GM13976 (cell line): ENCODE measurements at regions of chr7 and their contacts with region 1.

Region 1: GRCh38 chr7:155815332-155816191 is 3.3 kb upstream of the SHH start:
- DNase-seq: peak; percentile 92
- CTCF ChIP-seq: peak; percentile 93

Region 2: GRCh38 chr7:156473476-156474240 is 658.1 kb after region 1 on chr7:
- in situ Hi-C with region 1: loop called (anchors 10 kb)
- DNase-seq: peak; percentile 67
- CTCF ChIP-seq: peak; percentile 77

Region 3: DNA sequence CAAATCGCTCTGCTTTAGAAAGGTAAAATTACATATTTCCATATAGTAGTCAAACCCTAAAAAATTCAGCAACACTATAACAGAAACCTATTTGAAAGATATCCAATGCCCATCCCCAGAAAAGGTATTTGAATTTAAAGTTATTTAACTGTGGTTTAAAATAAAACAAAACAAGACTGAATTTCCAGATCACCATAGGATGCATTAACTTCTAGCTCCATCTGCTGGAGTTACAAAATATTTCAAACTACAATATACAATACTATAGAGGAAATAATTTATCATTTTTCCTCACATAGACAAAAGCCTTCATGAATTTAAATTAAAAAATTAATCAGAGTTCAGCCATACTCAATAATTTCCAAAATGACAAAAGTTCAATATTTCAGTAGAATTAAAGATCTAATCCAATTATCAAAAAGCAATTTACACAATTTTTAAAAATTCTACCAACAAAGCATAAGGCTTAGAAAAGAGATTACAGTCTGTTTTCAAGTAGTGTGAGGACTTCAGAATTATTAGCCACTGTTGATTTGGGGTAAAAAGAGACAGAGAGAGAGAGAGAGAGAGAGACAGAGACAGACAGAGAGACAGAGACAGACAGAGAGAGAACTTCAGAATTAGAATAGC is 1001.5 kb after region 1 on chr7:
- in situ Hi-C with region 1: loop called (anchors 25 kb)
- DNase-seq: peak; percentile 25
- CTCF ChIP-seq: peak; percentile 6